ENCODE measurements at regions of chr10 and their contacts with region 1.

Region 1: GRCh38 chr10:96229568-96230030 is 41.8 kb downstream of the BLNK start:
- DNase-seq: peak; percentile 24
- ATAC-seq: peak; percentile 86
- H3K4me3 ChIP-seq: no peak overlapping the region
- H3K27ac ChIP-seq: peak overlapping the region; percentile 51
- H3K4me1 ChIP-seq: peaks cover 13% of the 10 kb centered on the region
- H3K27me3 ChIP-seq: no peaks in the 10 kb centered on the region
- CTCF ChIP-seq: peak; percentile 93 to 98 (median 93)
- EP300 ChIP-seq: no peak
- POLR2A ChIP-seq: no peak; the same call in 1 of the 2 replicates
- RAD21 ChIP-seq: peak; percentile 89

Region 2: DNA sequence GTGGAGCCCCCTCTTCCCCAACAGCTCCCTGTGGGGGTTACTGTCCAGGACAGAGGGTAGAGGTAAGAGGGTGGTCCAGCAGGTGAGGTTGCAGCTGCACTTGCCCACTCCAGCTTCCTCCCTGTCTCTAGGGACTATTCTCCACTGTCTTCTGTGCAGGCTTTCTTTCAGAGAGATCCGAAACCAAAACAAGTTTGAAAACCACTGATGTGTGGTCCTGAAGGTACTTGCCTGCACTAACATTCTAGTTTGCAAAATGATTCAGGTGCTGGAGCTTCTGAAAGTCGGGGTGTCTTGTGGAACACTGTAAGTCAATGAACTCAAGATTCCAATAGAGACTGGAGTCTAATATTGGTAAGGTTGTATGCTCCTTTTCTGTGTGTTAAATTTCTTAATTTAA is 21.3 kb before region 1 on chr10:
- CTCF ChIA-PET with region 1: interaction called, 12 read pairs
- POLR2A ChIA-PET with region 1: no interaction called
- RAD21 ChIA-PET with region 1: interaction called, 7 read pairs
- SMC1A ChIA-PET with region 1: interaction called, 5 read pairs
- in situ Hi-C with region 1: no loop called
- intact Hi-C with region 1: no loop called
- DNase-seq: peak; percentile 21
- ATAC-seq: peak; percentile 82
- H3K4me3 ChIP-seq: no peak overlapping the region
- H3K27ac ChIP-seq: no peak overlapping the region
- H3K4me1 ChIP-seq: peaks cover 18% of the 10 kb centered on the region
- H3K27me3 ChIP-seq: no peaks in the 10 kb centered on the region
- CTCF ChIP-seq: no peak
- EP300 ChIP-seq: no peak
- POLR2A ChIP-seq: no peak
- RAD21 ChIP-seq: 0 out of 2 replicates have a peak, but pooled peaks have one; percentile 1

Region 3: DNA sequence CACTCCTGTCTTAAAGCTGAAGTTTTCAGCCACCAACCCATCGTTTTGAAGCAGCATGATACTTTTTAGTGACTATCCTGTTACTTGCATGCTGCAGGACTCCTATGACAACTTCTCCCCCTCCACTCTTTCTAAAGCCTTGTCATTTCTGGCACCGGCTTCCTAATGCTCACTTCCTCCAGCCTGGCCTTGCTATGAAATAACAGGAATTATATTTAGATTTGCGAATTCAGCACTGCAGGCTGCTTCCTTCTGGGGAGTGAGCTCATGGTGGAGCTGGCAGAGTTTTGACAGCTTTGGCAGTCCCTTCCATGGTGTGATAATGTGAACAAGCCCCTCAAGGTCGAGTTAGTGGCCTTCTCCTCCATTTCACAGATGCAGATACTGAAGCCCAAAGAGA is 28.3 kb after region 1 on chr10:
- CTCF ChIA-PET with region 1: interaction called, 219 read pairs
- POLR2A ChIA-PET with region 1: interaction called, 14 read pairs
- RAD21 ChIA-PET with region 1: interaction called, 159 read pairs
- SMC1A ChIA-PET with region 1: interaction called, 17 read pairs
- in situ Hi-C with region 1: no loop called
- intact Hi-C with region 1: no loop called
- DNase-seq: no peak
- ATAC-seq: peak; percentile 19; the same call in 2 of the 3 replicates
- H3K4me3 ChIP-seq: peak overlapping the region; percentile 1; the same call in 1 of the 2 replicates
- H3K27ac ChIP-seq: peak overlapping the region; percentile 38
- H3K4me1 ChIP-seq: peaks cover 34% of the 10 kb centered on the region
- H3K27me3 ChIP-seq: no peaks in the 10 kb centered on the region
- CTCF ChIP-seq: no peak
- EP300 ChIP-seq: no peak
- POLR2A ChIP-seq: no peak
- RAD21 ChIP-seq: no peak

Region 4: GRCh38 chr10:96287392-96288105 is 58.0 kb after region 1 on chr10:
- CTCF ChIA-PET with region 1: interaction called, 790 read pairs
- POLR2A ChIA-PET with region 1: interaction called, 60 read pairs
- RAD21 ChIA-PET with region 1: interaction called, 428 read pairs
- SMC1A ChIA-PET with region 1: interaction called, 424 read pairs
- in situ Hi-C with region 1: no loop called
- intact Hi-C with region 1: no loop called
- DNase-seq: peak; percentile 93
- ATAC-seq: peak; percentile 81
- H3K4me3 ChIP-seq: peak overlapping the region; percentile 70
- H3K27ac ChIP-seq: peak overlapping the region; percentile 92
- H3K4me1 ChIP-seq: peaks cover 50% of the 10 kb centered on the region
- H3K27me3 ChIP-seq: no peaks in the 10 kb centered on the region
- CTCF ChIP-seq: no peak
- EP300 ChIP-seq: peak; percentile 78 to 96; a peak in 3 of 4 replicates
- POLR2A ChIP-seq: no peak; the same call in 1 of the 2 replicates
- RAD21 ChIP-seq: 0 out of 2 replicates have a peak, but pooled peaks have one; percentile 29

Region 5: DNA sequence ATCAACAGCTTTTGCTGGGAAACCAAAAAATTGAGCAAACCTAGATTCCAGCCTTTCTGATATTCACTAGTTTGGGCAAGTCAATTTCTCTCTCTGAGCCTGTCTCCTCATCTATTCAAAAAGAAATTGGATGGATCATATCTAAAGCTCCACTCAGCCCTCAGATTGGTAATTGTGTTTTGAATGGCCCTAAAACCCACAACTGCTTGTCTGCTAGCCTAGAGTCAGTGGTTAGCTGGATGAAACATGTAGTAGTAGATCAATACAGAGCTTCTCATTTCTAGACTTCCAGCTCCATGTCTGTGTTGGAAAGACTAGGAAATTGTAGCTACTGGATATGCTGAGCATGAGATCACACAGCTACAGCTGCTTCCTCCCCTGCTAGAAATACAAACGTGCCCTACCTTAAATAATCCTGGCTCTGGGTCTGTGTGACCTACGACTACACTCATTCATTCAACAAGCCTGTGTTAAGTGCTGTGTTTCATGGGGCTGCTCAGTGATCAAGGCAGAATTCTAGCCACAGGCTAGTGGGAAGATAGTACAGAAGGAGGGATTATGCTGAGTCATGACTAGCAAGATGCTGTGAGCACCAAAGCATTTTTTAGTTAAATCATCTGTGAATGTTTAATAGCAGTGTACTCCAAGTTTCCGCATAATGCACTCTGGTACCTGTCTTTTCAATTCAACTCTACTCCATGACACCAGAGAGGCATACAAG is 90.3 kb after region 1 on chr10:
- CTCF ChIA-PET with region 1: interaction called, 22 read pairs
- POLR2A ChIA-PET with region 1: no interaction called
- RAD21 ChIA-PET with region 1: interaction called, 13 read pairs
- SMC1A ChIA-PET with region 1: interaction called, 19 read pairs
- in situ Hi-C with region 1: no loop called
- intact Hi-C with region 1: no loop called
- DNase-seq: no peak
- ATAC-seq: no peak
- H3K4me3 ChIP-seq: no peak overlapping the region
- H3K27ac ChIP-seq: no peak overlapping the region
- H3K4me1 ChIP-seq: no peaks in the 10 kb centered on the region
- H3K27me3 ChIP-seq: no peaks in the 10 kb centered on the region
- CTCF ChIP-seq: no peak
- EP300 ChIP-seq: no peak
- POLR2A ChIP-seq: no peak
- RAD21 ChIP-seq: no peak

Region 6: GRCh38 chr10:96565774-96566173 is 336.2 kb after region 1 on chr10:
- CTCF ChIA-PET with region 1: no interaction called
- POLR2A ChIA-PET with region 1: no interaction called
- RAD21 ChIA-PET with region 1: no interaction called
- SMC1A ChIA-PET with region 1: no interaction called
- in situ Hi-C with region 1: no loop called
- intact Hi-C with region 1: no loop called
- DNase-seq: no peak
- ATAC-seq: peak; percentile 55; the same call in 2 of the 3 replicates
- H3K4me3 ChIP-seq: no peak overlapping the region
- H3K27ac ChIP-seq: no peak overlapping the region
- H3K4me1 ChIP-seq: 0 out of 2 replicates have a peak, but pooled peaks cover 4% of the 10 kb centered on the region
- H3K27me3 ChIP-seq: no peaks in the 10 kb centered on the region
- CTCF ChIP-seq: no peak
- EP300 ChIP-seq: no peak
- POLR2A ChIP-seq: no peak
- RAD21 ChIP-seq: no peak

Region 7: GRCh38 chr10:97185326-97186058 is 955.9 kb after region 1 on chr10 and contains the start of gene SLIT1:
- CTCF ChIA-PET with region 1: no interaction called
- POLR2A ChIA-PET with region 1: no interaction called
- RAD21 ChIA-PET with region 1: no interaction called
- SMC1A ChIA-PET with region 1: no interaction called
- in situ Hi-C with region 1: no loop called
- intact Hi-C with region 1: no loop called
- DNase-seq: no peak
- ATAC-seq: peak; percentile 38; the same call in 2 of the 3 replicates
- H3K4me3 ChIP-seq: no peak within 1 kb of the TSS
- H3K27ac ChIP-seq: no peak within 1 kb of the TSS
- H3K4me1 ChIP-seq: no peaks in the 10 kb centered on the region
- H3K27me3 ChIP-seq: peaks cover 11 to 14% of the 10 kb centered on the region in 2 experiments
- CTCF ChIP-seq: no peak
- EP300 ChIP-seq: no peak
- POLR2A ChIP-seq: peak; percentile 36; the same call in 1 of the 2 replicates
- RAD21 ChIP-seq: no peak
- polyA plus RNA-seq, gene SLIT1: not detected

Measured in GM12878 (cell line).